Activated CD8-positive, alpha-beta memory T cell treated with anti-CD3 and anti-CD28 coated beads, Interleukin-2, amount 10 ng/mL, durations not matched to agents 7 days and 5 days (primary cell): ENCODE measurements at regions of chr19 and their contacts with region 1.

Region 1: DNA sequence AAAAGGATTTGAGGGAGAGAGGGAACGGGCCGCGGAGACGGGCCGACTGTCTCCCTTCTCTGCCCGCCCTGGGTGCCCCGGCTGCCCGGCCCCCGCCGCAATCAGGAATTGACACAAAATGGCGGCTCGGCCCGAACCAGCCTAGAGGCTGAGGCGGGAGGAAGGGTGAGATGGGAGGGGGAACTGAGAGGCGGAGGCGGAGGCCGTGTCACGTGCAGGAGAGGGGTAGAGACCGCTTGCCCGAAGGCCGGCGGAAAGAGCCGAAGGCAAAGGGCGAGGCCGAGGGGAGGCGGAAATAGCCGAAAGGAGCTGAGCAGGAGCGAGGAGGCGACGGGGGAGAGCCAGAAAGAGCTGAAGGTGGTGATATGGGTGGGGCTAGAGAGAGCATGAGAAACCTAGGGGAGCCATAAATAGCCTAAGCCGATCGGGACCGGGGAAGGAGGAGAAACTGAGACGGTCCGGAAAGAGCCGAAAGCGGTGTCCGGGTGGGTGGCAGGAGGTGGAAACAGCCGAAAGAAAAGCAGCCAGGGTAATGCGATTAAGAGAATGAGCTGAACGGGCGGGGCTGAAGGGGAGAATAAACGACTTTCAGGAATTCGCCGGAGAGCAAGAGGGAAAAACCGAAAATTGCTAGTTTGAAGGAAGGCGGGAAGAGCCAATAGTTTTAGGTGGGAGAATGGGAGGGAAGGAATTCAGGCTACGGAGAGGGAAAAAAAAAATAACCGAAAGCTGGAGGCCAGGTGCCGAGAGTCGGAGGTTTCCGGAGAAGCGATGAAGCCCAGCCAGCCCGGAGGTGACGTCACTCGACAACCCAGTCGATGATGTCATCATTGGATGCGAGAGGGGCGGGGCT is at the start of gene ZC3H4:
- DNase-seq: peak; percentile 100
- ATAC-seq: peak; percentile 86
- H3K4me3 Mint-ChIP-seq: peak within 1 kb of the TSS; percentile 95
- H3K27ac Mint-ChIP-seq: peak within 1 kb of the TSS; percentile 100
- H3K4me1 Mint-ChIP-seq: peaks cover 24% of the 10 kb centered on the region
- H3K27me3 Mint-ChIP-seq: no peaks in the 10 kb centered on the region
- total RNA-seq, gene ZC3H4: 98.9 to 114 TPM

Region 2: DNA sequence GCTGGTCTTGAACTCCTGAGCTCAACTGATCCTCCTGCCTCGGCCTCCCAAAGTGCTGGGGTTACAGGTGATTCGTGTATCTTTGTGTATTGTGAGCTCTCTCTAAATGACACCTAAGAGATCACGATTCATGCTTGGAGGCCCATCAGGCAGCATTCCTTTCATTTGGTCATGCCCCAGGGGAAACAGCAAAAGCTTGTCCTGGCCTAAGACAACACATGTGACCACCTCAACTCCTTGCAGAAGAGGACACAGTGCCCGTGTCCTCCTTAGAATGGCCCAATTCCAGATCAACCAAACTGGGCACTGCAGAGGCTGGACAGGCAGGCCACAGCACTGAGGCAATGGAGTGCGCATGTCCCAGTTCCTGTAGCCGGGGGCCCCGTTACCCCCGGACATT is 32.1 kb before region 1 on chr19:
- CTCF ChIA-PET with region 1: interaction called, 20 read pairs
- DNase-seq: no peak
- ATAC-seq: no peak
- H3K4me3 Mint-ChIP-seq: no peak overlapping the region
- H3K27ac Mint-ChIP-seq: peak overlapping the region; percentile 36
- H3K4me1 Mint-ChIP-seq: no peaks in the 10 kb centered on the region
- H3K27me3 Mint-ChIP-seq: no peaks in the 10 kb centered on the region

Region 3: GRCh38 chr19:47176627-47177090 is 63.4 kb after region 1 on chr19:
- CTCF ChIA-PET with region 1: no interaction called
- DNase-seq: peak; percentile 46
- ATAC-seq: peak; percentile 65
- H3K4me3 Mint-ChIP-seq: no peak overlapping the region
- H3K27ac Mint-ChIP-seq: peak overlapping the region; percentile 74
- H3K4me1 Mint-ChIP-seq: peaks cover 55% of the 10 kb centered on the region
- H3K27me3 Mint-ChIP-seq: no peaks in the 10 kb centered on the region